Activated T-helper 1 cell treated with anti-CD3 and anti-CD28 coated beads, Interleukin-12 subunit alpha, Interleukin-12 subunit beta, Interleukin-2, Interleukin-4 antibody, amounts not matched to agents 30 ng/mL and 10 ng/mL and 1 ng/mL, durations not matched to agents 14 hours and 24 hours and 36 hours (primary cell): ENCODE measurements at regions of chr3 and their contacts with region 1.

Region 1: GRCh38 chr3:125594581-125595011 is 701 bp downstream of the OSBPL11 start:
- DNase-seq: peak; percentile 1
- H3K4me3 Mint-ChIP-seq: peak overlapping the region; percentile 95
- H3K27ac Mint-ChIP-seq: peak overlapping the region; percentile 88
- H3K4me1 Mint-ChIP-seq: peaks cover 28% of the 10 kb centered on the region
- H3K27me3 Mint-ChIP-seq: no peaks in the 10 kb centered on the region

Region 2: DNA sequence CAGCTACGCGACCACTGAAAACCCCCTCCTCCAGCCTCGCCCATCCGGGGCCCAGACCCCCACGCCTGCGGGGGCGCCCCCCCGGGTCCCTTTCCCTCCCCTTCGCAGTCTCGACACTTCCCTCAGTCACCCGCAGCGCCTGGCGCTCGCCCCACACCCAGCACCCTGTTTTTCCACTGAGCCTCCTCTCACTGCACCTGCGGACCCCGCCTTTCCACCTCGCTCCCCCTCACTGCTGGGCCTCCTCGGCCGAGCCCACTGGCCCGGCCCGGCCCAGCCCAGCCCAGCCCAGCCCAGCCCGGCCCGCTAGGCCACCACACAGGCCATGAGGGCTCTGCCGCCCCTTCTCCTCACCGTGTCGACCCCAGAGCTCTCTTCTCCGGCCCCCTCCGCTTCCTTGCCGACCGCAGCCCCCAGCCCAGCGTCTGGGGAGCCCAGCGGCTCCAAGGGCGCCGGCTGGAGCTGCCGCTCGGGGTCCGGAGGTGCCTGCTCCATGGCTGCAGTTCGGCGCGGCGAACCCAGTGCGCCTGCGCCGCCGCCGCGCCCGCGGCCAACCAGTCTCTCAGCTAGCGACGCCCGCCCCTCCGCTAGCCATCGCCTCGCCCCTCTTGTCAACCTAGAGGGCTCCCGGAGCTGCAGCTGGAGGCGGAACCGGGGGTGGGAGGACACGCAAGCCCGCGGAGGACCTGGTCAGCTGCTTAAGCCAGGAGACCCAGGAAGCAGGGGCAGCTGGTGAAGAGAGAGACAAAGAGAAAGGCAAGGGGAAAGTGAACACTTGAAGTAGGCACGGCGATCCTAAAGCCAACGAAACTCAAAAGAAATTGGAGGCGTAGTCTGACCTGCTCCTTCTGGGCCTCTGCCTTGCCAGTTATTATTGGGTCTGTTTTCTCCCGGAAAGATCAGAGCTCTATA is 74.7 kb before region 1 on chr3 and contains the start of gene SNX4:
- intact Hi-C with region 1: loop called (anchors 1 kb)
- DNase-seq: peak; percentile 85
- H3K4me3 Mint-ChIP-seq: peak within 1 kb of the TSS; percentile 98
- H3K27ac Mint-ChIP-seq: peak within 1 kb of the TSS; percentile 74
- H3K4me1 Mint-ChIP-seq: peaks cover 28% of the 10 kb centered on the region
- H3K27me3 Mint-ChIP-seq: no peaks in the 10 kb centered on the region
- total RNA-seq, gene SNX4: 40.7 and 44.4 TPM in 2 replicates